Calu3 (cell line): ENCODE measurements at regions of chr3 and their contacts with region 1.

Region 1: GRCh38 chr3:126522363-126522788 is 1.6 kb upstream of the CHST13 start:
- DNase-seq: peak; percentile 82
- H3K4me3 Mint-ChIP-seq: no peak overlapping the region
- H3K27ac Mint-ChIP-seq: no peak overlapping the region
- H3K4me1 Mint-ChIP-seq: no peaks in the 10 kb centered on the region
- H3K27me3 Mint-ChIP-seq: peaks cover 80% of the 10 kb centered on the region
- CTCF ChIP-seq: peak; percentile 98

Region 2: DNA sequence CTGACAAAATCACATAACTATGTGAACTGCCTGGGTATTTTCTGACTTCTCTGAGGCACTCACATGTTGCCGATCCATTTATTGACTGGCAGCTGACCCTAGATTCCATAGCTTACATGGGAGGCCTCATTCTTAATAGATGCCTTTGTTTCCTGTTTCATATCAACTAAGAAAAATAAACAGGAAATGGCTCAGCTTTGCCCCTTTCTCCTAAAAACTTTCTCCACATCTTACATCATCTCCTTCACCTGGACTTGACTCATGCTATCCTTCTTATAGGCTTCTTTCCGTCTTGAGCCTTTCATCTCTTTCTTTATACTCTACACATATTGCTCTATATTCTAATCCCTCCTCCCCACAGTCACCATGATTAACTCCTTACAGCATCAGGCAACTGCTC is 94.6 kb after region 1 on chr3:
- CTCF ChIA-PET with region 1: no interaction called
- intact Hi-C with region 1: loop called (anchors 1 kb)
- DNase-seq: peak; percentile 49
- H3K4me3 Mint-ChIP-seq: peak overlapping the region; percentile 5
- H3K27ac Mint-ChIP-seq: peak overlapping the region; percentile 58
- H3K4me1 Mint-ChIP-seq: peaks cover 64% of the 10 kb centered on the region
- H3K27me3 Mint-ChIP-seq: no peaks in the 10 kb centered on the region
- CTCF ChIP-seq: no peak

Region 3: DNA sequence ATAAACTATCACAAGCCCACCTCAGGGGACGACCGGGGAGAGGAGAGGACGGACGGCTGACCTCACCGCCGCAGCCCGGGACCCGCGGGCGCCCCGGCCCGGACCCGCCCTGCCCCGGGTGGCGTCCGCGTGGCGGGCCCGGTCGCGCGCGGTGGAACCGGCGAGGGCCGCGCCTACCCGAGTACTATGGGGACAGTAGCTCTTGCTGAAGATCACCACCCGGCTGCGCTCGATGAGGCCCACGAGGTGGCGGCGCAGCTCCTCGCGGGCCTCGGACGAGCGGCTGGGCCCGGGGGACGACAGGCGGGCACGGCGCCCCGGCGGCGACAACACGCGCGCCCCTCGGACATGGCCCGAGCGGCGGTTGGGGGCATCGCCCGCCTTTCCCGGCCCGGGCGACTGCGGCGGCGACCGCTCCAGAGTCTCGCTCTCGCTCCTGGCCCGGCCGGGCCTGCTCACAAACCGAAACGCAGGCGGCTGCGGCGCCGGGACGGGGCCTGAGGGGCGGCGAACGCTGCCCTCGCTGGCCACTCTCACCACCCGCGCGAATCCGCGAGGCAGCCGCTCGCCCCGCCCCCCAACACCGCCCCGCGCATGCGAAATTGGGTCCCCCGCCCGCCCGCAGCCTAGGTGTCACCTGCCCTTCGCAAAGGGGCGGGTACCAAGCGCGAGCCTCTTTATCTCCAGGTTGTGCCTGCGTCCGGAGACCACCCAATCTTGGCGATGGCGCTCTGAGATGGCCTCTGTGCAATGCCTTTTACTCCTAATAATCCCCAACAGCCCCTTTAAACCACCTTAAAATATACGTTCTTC is 132.4 kb after region 1 on chr3 and contains the start of gene TXNRD3:
- CTCF ChIA-PET with region 1: no interaction called
- intact Hi-C with region 1: loop called (anchors 10 kb)
- DNase-seq: peak; percentile 98
- H3K4me3 Mint-ChIP-seq: peak within 1 kb of the TSS; percentile 74
- H3K27ac Mint-ChIP-seq: peak within 1 kb of the TSS; percentile 35
- H3K4me1 Mint-ChIP-seq: peaks cover 12% of the 10 kb centered on the region
- H3K27me3 Mint-ChIP-seq: no peaks in the 10 kb centered on the region
- CTCF ChIP-seq: no peak
- total RNA-seq, gene TXNRD3: 15.7 and 17.0 TPM in 2 replicates

Region 4: DNA sequence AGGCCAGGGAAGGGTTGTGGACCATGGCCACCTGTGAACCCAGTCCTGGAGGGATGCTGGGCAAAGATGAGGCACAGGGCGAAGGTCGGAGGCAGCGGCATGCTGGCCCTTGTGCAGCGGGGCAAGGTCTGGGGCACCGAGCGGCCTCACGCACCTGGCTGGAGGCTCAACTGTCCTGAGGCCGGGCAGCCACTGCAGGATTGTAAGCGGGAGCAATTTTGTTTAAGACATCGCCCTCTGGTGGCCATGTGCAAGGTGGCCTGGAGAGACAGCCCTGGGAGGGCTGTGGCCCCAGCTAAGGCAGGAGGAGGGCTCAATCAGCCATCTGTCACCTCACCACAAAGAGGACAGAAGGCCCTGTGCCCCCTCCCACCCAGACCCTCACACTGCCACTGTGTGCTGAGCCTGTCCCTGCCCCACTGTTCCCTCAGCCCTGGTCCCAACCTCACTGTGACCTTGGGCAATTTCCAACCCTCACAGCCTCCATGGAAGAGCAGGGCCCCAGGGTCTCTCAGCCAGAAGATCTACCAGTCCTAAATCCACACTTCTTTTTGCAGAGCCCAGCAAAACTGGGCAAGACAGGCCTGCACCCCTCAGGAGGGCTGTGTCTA is 1021.9 kb after region 1 on chr3:
- CTCF ChIA-PET with region 1: no interaction called
- intact Hi-C with region 1: loop called (anchors 5 kb)
- DNase-seq: peak; percentile 92
- H3K4me3 Mint-ChIP-seq: no peak overlapping the region
- H3K27ac Mint-ChIP-seq: no peak overlapping the region
- H3K4me1 Mint-ChIP-seq: peaks cover 7% of the 10 kb centered on the region
- H3K27me3 Mint-ChIP-seq: peaks cover 59% of the 10 kb centered on the region
- CTCF ChIP-seq: peak; percentile 96